ENCODE measurements at regions of chr17 and their contacts with region 1.

Region 1: GRCh38 chr17:75109407-75110233 is at the start of gene ARMC7:
- DNase-seq: peak; percentile 96 to 97 (median 96)
- ATAC-seq: peak; percentile 90
- H3K4me3 ChIP-seq: peak within 1 kb of the TSS; percentile 71
- H3K27ac ChIP-seq: peak within 1 kb of the TSS; percentile 83
- H3K4me1 ChIP-seq: peaks cover 8 to 33% of the 10 kb centered on the region in 2 experiments
- H3K27me3 ChIP-seq: no peaks in the 10 kb centered on the region
- CTCF ChIP-seq: peak in 1 of 3 experiments; percentile 24; a peak in 1 of 6 replicates
- EP300 ChIP-seq: no peak
- POLR2A ChIP-seq: peak; percentile 79
- RAD21 ChIP-seq: peak in 1 of 2 experiments; percentile 44; a peak in 3 of 4 replicates
- polyA plus RNA-seq, gene ARMC7: 1.4 to 2.8 TPM

Region 2: DNA sequence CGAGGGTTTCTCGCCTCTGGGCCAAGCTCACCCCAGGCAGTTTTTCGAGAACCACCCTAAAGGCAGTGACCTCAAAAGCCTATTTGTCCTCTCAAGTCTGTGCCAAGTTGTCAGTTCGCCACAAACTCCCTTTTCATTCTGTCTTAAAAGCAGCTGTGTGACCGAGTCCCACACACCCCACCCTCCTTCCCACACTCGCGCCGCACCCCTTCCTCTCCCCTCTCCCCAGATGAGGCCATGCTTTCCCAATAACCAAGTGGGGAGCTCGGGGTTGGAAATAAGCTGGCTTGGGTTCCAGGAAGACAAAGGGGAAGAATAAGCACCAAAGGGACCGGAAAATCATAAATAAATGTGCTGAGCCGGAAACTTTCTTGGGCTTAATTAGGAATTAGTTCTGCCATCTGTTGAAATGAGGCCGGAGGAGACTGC is 286.7 kb before region 1 on chr17:
- CTCF ChIA-PET with region 1: no interaction called
- POLR2A ChIA-PET with region 1: no interaction called
- in situ Hi-C with region 1: no loop called
- intact Hi-C with region 1: no loop called
- DNase-seq: no peak
- ATAC-seq: no peak
- H3K4me3 ChIP-seq: no peak overlapping the region
- H3K27ac ChIP-seq: no peak overlapping the region
- H3K4me1 ChIP-seq: peaks cover 0 to 7% of the 10 kb centered on the region in 2 experiments; a peak in 1 of 5 replicates
- H3K27me3 ChIP-seq: no peaks in the 10 kb centered on the region
- CTCF ChIP-seq: no peak
- EP300 ChIP-seq: no peak
- POLR2A ChIP-seq: no peak
- RAD21 ChIP-seq: no peak

Region 3: GRCh38 chr17:74961657-74962490 is 147.7 kb before region 1 on chr17:
- CTCF ChIA-PET with region 1: no interaction called
- POLR2A ChIA-PET with region 1: interaction called, 5 read pairs
- in situ Hi-C with region 1: loop called (anchors 5 kb)
- intact Hi-C with region 1: loop called (anchors 5 kb)
- DNase-seq: peak; percentile 81 to 92 (median 84)
- ATAC-seq: peak; percentile 87
- H3K4me3 ChIP-seq: no peak overlapping the region
- H3K27ac ChIP-seq: no peak overlapping the region
- H3K4me1 ChIP-seq: peaks cover 10 to 49% of the 10 kb centered on the region in 2 experiments; a peak in 4 of 5 replicates
- H3K27me3 ChIP-seq: no peaks in the 10 kb centered on the region
- CTCF ChIP-seq: peak; percentile 74 to 85 (median 84)
- EP300 ChIP-seq: no peak
- POLR2A ChIP-seq: no peak
- RAD21 ChIP-seq: peak; percentile 96 to 99

Region 4: DNA sequence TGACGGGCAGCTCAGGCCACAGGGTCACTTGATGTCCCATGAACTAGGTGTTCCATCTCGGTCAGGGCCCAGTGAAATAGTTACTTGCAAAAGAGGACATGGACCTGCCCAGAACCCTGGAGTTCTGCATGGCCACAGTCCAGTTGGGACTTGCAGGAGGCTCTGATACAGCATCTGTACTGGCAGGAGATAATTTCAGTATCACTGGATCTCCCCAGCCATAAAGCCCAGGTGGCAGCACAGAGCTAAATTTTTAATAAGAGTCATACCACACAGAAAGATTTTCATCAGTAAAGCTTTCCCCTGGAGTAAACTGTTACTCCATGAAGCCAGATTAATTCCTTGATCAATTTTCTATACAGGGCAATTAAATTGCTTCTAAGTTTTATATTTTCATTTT is 39.8 kb before region 1 on chr17:
- CTCF ChIA-PET with region 1: no interaction called
- POLR2A ChIA-PET with region 1: interaction called, 3 read pairs
- in situ Hi-C with region 1: loop called (anchors 5 kb)
- intact Hi-C with region 1: loop called (anchors 5 kb)
- DNase-seq: no peak
- ATAC-seq: no peak
- H3K4me3 ChIP-seq: no peak overlapping the region
- H3K27ac ChIP-seq: no peak overlapping the region
- H3K4me1 ChIP-seq: peaks cover 30 to 31% of the 10 kb centered on the region in 2 experiments
- H3K27me3 ChIP-seq: no peaks in the 10 kb centered on the region
- CTCF ChIP-seq: peak in 2 of 3 experiments; percentile 21 to 36; a peak in 2 of 6 replicates
- EP300 ChIP-seq: no peak
- POLR2A ChIP-seq: no peak
- RAD21 ChIP-seq: peak; percentile 51 to 56

Region 5: DNA sequence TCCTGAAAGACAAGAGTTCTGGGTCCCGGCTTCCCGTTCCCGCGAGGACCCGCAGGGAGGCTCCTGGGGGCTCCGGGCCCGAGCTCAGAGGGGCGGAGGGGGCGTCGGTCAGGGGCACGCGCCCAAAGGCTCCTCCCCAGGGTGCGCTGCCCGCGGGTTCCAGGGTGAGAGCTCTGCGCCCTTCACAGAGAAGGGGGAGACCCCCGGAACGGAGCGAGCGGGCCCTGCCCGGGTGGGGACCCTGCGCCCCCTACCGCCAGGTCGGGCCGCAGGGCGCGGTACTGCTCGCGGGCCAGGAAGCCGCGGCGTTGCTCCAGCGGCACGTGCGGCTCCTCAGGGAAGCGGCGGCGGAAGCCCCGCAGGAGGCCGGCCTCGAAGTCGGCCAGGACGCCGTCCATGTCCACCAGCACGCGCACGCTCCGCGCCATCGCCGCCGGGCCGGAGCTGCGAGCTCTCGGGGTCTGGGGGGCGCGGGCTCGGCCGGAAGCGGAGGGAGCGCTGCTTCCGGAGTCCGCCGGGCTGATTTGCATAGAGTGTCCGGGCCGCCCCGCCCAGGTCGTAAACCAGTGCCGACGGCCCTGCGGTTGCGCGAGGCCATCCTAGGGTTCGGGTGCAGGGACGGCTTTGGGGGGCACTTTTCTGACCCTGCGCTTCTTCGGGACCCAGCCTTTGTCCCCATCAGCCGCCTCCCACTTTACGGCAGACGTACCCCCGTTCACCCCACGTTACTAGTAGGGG is 21.8 kb after region 1 on chr17 and contains the start of gene NT5C:
- CTCF ChIA-PET with region 1: interaction called, 5 read pairs
- POLR2A ChIA-PET with region 1: interaction called, 16 read pairs
- in situ Hi-C with region 1: no loop called
- intact Hi-C with region 1: no loop called
- DNase-seq: peak; percentile 86 to 92 (median 88)
- ATAC-seq: peak; percentile 90
- H3K4me3 ChIP-seq: peak within 1 kb of the TSS; percentile 90
- H3K27ac ChIP-seq: peak within 1 kb of the TSS; percentile 90
- H3K4me1 ChIP-seq: peaks cover 12 to 36% of the 10 kb centered on the region in 2 experiments; a peak in 4 of 5 replicates
- H3K27me3 ChIP-seq: no peaks in the 10 kb centered on the region
- CTCF ChIP-seq: peak; percentile 75 to 86 (median 77)
- EP300 ChIP-seq: no peak
- POLR2A ChIP-seq: peak; percentile 83
- RAD21 ChIP-seq: peak; percentile 70 to 72
- polyA plus RNA-seq, gene NT5C: 2.9 to 5.0 TPM

Region 6: GRCh38 chr17:75199886-75200618 is 90.4 kb after region 1 on chr17:
- CTCF ChIA-PET with region 1: interaction called, 33 read pairs
- POLR2A ChIA-PET with region 1: interaction called, 12 read pairs
- in situ Hi-C with region 1: no loop called
- intact Hi-C with region 1: loop called (anchors 1 kb)
- DNase-seq: no peak
- ATAC-seq: no peak
- H3K4me3 ChIP-seq: no peak overlapping the region
- H3K27ac ChIP-seq: no peak overlapping the region
- H3K4me1 ChIP-seq: peaks cover 0 to 4% of the 10 kb centered on the region in 2 experiments; a peak in 1 of 5 replicates
- H3K27me3 ChIP-seq: no peaks in the 10 kb centered on the region
- CTCF ChIP-seq: no peak
- EP300 ChIP-seq: no peak
- POLR2A ChIP-seq: no peak
- RAD21 ChIP-seq: no peak

Region 7: GRCh38 chr17:75412455-75413317 is 303.1 kb after region 1 on chr17:
- CTCF ChIA-PET with region 1: no interaction called
- POLR2A ChIA-PET with region 1: no interaction called
- in situ Hi-C with region 1: loop called (anchors 10 kb)
- intact Hi-C with region 1: no loop called
- DNase-seq: peak; percentile 69 to 84 (median 72)
- ATAC-seq: peak; percentile 92
- H3K4me3 ChIP-seq: no peak overlapping the region
- H3K27ac ChIP-seq: no peak overlapping the region
- H3K4me1 ChIP-seq: no peaks in the 10 kb centered on the region
- H3K27me3 ChIP-seq: peaks cover 0 to 9% of the 10 kb centered on the region in 2 experiments; a peak in 2 of 5 replicates
- CTCF ChIP-seq: peak; percentile 88 to 92 (median 91)
- EP300 ChIP-seq: no peak
- POLR2A ChIP-seq: no peak
- RAD21 ChIP-seq: peak; percentile 94 to 98

Measured in K562 (cell line).